Activated CD4-positive, alpha-beta T cell treated with anti-CD3 and anti-CD28 coated beads, Interleukin-2, amount 10 ng/mL, durations not matched to agents 24 days and 14 days (primary cell): ENCODE measurements at regions of chr13 and their contacts with region 1.

Region 1: DNA sequence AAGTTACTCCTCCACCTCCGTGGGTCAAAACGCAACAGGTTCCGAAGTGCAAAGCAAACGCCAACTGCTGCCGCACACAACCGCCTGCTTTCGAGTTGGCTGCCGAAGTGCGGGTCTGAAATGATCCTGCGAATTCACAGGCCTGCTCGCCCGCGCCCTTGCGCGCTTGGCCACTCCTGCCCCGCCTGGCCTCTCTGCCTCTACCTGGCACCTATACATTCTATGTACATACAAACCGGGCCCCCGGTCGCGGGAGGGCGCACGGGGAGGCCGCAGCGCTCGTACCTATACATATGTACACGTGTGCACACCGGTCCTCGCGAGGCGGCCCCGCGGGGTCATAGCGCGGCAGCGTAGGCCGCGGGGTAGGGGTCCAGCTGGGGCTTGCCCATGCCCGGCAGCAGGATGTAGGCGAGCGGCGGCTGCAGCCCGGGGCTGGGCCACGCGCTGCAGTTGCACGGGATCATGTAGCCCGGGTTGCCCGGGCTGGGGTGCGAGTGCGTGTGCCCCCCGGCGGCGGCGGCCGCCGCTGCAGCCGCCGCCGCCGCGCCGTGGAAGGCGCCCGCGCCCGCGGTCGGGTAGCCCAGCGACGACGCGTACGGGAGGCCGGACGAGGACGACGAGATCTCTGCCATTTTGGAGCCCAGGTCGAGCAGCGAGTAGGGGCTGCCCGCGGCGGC is 1.3 kb downstream of the SOX21 start:
- DNase-seq: peak; percentile 70
- H3K4me3 Mint-ChIP-seq: peak overlapping the region; percentile 65
- H3K27ac Mint-ChIP-seq: peak overlapping the region; percentile 76
- H3K4me1 Mint-ChIP-seq: peaks cover 17% of the 10 kb centered on the region
- H3K27me3 Mint-ChIP-seq: peaks cover 76% of the 10 kb centered on the region

Region 2: GRCh38 chr13:94435604-94436226 is 275.3 kb before region 1 on chr13:
- intact Hi-C with region 1: loop called (anchors 10 kb)
- DNase-seq: peak; percentile 63
- H3K4me3 Mint-ChIP-seq: no peak overlapping the region
- H3K27ac Mint-ChIP-seq: no peak overlapping the region
- H3K4me1 Mint-ChIP-seq: peaks cover 9% of the 10 kb centered on the region
- H3K27me3 Mint-ChIP-seq: peaks cover 6% of the 10 kb centered on the region

Region 3: DNA sequence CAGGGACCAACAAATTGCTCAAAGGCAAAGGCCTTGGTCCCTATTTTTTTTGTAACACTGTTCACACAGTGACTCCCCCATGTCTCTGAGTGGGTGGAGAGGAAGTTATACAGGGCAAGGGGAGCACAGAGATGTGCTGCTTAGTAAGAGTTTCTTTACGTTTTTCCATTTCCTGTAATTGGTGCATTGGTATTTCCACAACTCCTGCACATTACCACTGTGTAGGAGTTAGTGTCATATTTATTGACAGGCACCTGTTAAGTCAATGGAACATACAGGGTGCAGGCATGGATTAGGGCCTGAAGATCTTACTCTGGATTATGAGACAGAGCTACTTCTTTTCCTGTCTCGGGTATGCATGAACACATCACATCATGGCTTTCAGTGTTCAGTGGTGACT is 43.8 kb before region 1 on chr13:
- intact Hi-C with region 1: loop called (anchors 2 kb)
- DNase-seq: peak; percentile 59
- H3K4me3 Mint-ChIP-seq: peak overlapping the region; percentile 39
- H3K27ac Mint-ChIP-seq: peak overlapping the region; percentile 92
- H3K4me1 Mint-ChIP-seq: peaks cover 32% of the 10 kb centered on the region
- H3K27me3 Mint-ChIP-seq: peaks cover 13% of the 10 kb centered on the region

Region 4: GRCh38 chr13:94825507-94825906 is 114.5 kb after region 1 on chr13:
- intact Hi-C with region 1: no loop called
- DNase-seq: no peak
- H3K4me3 Mint-ChIP-seq: no peak overlapping the region
- H3K27ac Mint-ChIP-seq: no peak overlapping the region
- H3K4me1 Mint-ChIP-seq: no peaks in the 10 kb centered on the region
- H3K27me3 Mint-ChIP-seq: peaks cover 2% of the 10 kb centered on the region

Region 5: DNA sequence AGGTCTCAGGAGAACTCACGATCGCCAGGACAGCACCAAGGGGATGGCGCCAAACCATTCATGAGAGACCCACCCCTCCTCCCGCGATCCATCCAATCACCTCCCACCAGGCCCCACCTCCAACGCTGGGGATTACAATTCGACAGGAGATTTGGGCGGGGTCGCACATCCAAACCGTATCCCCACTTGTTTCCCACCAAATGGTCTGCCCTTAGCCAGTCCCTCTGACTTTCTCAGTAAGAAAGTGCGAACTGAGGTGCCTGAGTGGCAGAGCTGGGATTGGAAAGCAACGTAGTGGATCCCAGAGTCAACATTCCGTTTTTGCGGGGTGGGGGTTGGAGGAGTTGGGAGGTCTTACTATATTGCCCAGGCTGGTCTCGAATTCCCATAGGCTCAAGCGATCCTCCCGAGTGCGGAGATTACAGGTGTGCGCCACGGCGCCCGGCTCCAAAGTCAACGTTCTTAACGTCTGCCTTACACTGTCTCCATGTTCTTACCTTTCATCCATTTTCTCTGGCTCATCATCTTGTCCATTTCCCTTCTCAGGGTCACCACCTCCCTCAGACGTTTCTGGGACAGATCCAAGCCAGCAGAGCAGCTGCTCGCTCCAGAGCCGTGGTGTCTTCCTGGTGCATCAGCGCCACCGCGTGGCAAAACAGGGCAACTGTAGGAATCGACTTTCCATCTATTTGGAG is 693.0 kb after region 1 on chr13:
- intact Hi-C with region 1: loop called (anchors 10 kb)
- DNase-seq: peak; percentile 92
- H3K4me3 Mint-ChIP-seq: peak overlapping the region; percentile 80
- H3K27ac Mint-ChIP-seq: no peak overlapping the region
- H3K4me1 Mint-ChIP-seq: peaks cover 7% of the 10 kb centered on the region
- H3K27me3 Mint-ChIP-seq: peaks cover 7% of the 10 kb centered on the region

Region 6: GRCh38 chr13:95644601-95645052 is 933.6 kb after region 1 on chr13 and contains the start of gene DZIP1:
- intact Hi-C with region 1: loop called (anchors 5 kb)
- DNase-seq: peak; percentile 76
- H3K4me3 Mint-ChIP-seq: peak within 1 kb of the TSS; percentile 79
- H3K27ac Mint-ChIP-seq: no peak within 1 kb of the TSS
- H3K4me1 Mint-ChIP-seq: peaks cover 8% of the 10 kb centered on the region
- H3K27me3 Mint-ChIP-seq: peaks cover 55% of the 10 kb centered on the region
- total RNA-seq, gene DZIP1: 0.12 and 0.14 TPM in 2 replicates